Vagina (tissue), 2 donors: ENCODE measurements at regions of chr10 and their contacts with region 1.

Region 1: GRCh38 chr10:92342796-92343195 is 51.8 kb downstream of the MARCHF5 start:
- DNase-seq: no peak
- H3K4me3 ChIP-seq: no peak overlapping the region
- H3K27ac ChIP-seq: no peak overlapping the region
- H3K4me1 ChIP-seq: no peaks in the 10 kb centered on the region
- H3K27me3 ChIP-seq: no peaks in the 10 kb centered on the region
- CTCF ChIP-seq: no peak
- POLR2A ChIP-seq: no peak

Region 2: DNA sequence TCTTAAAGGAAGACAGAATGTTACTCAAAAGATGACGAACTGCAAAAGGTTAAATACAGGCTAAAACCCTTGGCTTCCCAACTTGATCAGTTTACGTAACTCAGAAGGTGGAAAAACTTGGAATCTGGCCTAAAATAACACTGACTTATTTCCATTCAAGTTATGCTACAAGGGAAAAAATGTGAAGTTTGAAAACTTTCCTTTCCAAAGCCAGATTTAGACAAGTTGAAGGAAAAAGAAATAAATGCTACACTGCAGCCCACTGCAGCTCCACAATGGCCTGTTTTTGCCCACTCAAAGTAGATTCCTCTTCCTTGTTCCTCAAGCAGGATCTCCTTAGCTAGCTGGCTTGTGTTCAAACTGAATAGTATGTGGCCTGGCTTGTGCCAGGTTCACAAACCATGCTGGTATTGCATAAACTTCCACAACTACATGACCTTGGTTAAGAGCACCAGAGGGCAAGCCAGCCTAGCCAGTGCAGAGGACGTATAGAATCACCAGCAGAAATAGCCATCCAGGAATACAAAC is 218.1 kb before region 1 on chr10:
- intact Hi-C with region 1: no loop called
- DNase-seq: no peak
- H3K4me3 ChIP-seq: no peak overlapping the region
- H3K27ac ChIP-seq: peak overlapping the region; percentile 1
- H3K4me1 ChIP-seq: peaks cover 45% of the 10 kb centered on the region
- H3K27me3 ChIP-seq: no peaks in the 10 kb centered on the region
- CTCF ChIP-seq: no peak
- POLR2A ChIP-seq: no peak

Region 3: GRCh38 chr10:93505075-93505474 is 1162.3 kb after region 1 on chr10:
- intact Hi-C with region 1: loop called (anchors 5 kb)
- DNase-seq: no peak
- H3K4me3 ChIP-seq: no peak overlapping the region
- H3K27ac ChIP-seq: no peak overlapping the region
- H3K4me1 ChIP-seq: no peaks in the 10 kb centered on the region
- H3K27me3 ChIP-seq: no peaks in the 10 kb centered on the region
- CTCF ChIP-seq: no peak
- POLR2A ChIP-seq: no peak